ENCODE measurements at regions of chr6 and their contacts with region 1.

Region 1: DNA sequence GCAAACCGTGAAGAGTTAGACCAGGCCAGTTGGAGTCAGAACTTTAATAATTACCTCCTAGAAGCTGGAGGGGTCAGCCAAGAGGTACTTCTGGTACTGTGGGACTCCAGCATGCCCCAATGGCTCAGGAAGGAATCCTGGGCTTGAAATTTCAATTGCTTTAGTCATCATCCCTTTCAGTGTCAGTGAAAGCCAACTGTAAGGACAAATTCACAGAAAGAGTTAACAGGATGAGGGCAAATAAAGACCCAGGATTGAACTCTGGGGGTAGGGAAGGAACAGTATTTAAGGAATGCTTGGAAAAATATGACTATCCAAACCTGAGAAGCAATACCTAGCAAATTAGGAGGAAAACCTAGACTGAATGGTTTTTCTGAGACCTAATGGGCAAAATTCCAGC is 735.1 kb upstream of the MARCKS start:
- DNase-seq: peak; percentile 62 to 95
- H3K4me3 ChIP-seq: peak overlapping the region; percentile 6; the same call in 1 of the 2 replicates
- H3K27ac ChIP-seq: peak overlapping the region; percentile 93
- H3K4me1 ChIP-seq: peaks cover 57% of the 10 kb centered on the region
- H3K27me3 ChIP-seq: no peaks in the 10 kb centered on the region
- CTCF ChIP-seq: peak; percentile 63

Region 2: GRCh38 chr6:112906726-112907125 is 215.3 kb before region 1 on chr6:
- CTCF ChIA-PET with region 1: no interaction called
- POLR2A ChIA-PET with region 1: no interaction called
- intact Hi-C with region 1: loop called (anchors 1 kb)
- DNase-seq: no peak
- H3K4me3 ChIP-seq: no peak overlapping the region
- H3K27ac ChIP-seq: no peak overlapping the region
- H3K4me1 ChIP-seq: peaks cover 9% of the 10 kb centered on the region
- H3K27me3 ChIP-seq: no peaks in the 10 kb centered on the region
- CTCF ChIP-seq: no peak

Region 3: DNA sequence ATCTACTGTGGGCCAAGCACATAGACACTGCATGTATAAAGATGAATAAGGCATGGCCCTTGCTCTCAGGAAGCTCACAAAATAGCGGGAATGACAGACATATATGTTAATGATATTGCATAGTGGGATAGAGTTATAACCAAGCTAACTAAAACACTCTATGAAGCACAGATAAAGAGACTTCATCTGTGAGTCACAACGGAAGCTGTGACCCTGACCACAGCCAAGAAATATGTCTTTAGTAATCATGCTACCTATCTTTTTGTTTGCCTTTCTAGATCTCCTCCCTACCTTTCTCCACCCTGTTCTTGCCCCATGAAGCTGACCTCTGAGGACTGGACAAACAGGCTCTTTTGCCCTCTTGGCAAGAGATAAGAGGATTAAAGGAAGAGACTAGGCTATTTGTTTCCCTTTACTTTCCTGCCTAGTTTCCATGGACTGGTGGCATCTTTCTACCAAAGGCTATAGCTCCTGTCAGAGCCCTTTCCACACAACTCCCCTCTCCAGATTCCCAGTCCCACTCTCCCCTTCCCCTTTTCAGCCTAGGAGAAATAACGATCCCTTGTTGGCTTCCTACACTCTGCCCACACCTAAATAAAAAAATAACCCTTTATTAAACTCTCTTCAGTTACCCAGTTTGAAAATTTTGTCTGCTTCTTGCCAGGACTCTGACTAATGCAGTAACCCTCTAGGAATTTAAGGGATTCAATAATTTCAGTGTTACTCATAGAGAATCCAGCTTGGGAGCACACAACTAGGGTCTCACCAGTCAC is 230.2 kb after region 1 on chr6:
- CTCF ChIA-PET with region 1: no interaction called
- POLR2A ChIA-PET with region 1: no interaction called
- intact Hi-C with region 1: loop called (anchors 1 kb)
- DNase-seq: peak; percentile 77 to 100
- H3K4me3 ChIP-seq: peak overlapping the region; percentile 27
- H3K27ac ChIP-seq: peak overlapping the region; percentile 94
- H3K4me1 ChIP-seq: peaks cover 59% of the 10 kb centered on the region
- H3K27me3 ChIP-seq: no peaks in the 10 kb centered on the region
- CTCF ChIP-seq: no peak

Region 4: GRCh38 chr6:113433335-113433991 is 311.4 kb after region 1 on chr6:
- CTCF ChIA-PET with region 1: no interaction called
- POLR2A ChIA-PET with region 1: no interaction called
- intact Hi-C with region 1: loop called (anchors 1 kb)
- DNase-seq: peak; percentile 61 to 99
- H3K4me3 ChIP-seq: peak overlapping the region; percentile 16; the same call in 1 of the 2 replicates
- H3K27ac ChIP-seq: peak overlapping the region; percentile 87
- H3K4me1 ChIP-seq: peaks cover 48% of the 10 kb centered on the region
- H3K27me3 ChIP-seq: no peaks in the 10 kb centered on the region
- CTCF ChIP-seq: no peak

Region 5: GRCh38 chr6:113654396-113654795 is 532.3 kb after region 1 on chr6:
- CTCF ChIA-PET with region 1: no interaction called
- POLR2A ChIA-PET with region 1: no interaction called
- intact Hi-C with region 1: loop called (anchors 1 kb)
- DNase-seq: peak; percentile 81 to 95
- H3K4me3 ChIP-seq: 0 out of 2 replicates have a peak overlapping the region, but pooled peaks have one; percentile 20
- H3K27ac ChIP-seq: peak overlapping the region; percentile 75
- H3K4me1 ChIP-seq: peaks cover 27% of the 10 kb centered on the region
- H3K27me3 ChIP-seq: no peaks in the 10 kb centered on the region
- CTCF ChIP-seq: no peak

Region 6: DNA sequence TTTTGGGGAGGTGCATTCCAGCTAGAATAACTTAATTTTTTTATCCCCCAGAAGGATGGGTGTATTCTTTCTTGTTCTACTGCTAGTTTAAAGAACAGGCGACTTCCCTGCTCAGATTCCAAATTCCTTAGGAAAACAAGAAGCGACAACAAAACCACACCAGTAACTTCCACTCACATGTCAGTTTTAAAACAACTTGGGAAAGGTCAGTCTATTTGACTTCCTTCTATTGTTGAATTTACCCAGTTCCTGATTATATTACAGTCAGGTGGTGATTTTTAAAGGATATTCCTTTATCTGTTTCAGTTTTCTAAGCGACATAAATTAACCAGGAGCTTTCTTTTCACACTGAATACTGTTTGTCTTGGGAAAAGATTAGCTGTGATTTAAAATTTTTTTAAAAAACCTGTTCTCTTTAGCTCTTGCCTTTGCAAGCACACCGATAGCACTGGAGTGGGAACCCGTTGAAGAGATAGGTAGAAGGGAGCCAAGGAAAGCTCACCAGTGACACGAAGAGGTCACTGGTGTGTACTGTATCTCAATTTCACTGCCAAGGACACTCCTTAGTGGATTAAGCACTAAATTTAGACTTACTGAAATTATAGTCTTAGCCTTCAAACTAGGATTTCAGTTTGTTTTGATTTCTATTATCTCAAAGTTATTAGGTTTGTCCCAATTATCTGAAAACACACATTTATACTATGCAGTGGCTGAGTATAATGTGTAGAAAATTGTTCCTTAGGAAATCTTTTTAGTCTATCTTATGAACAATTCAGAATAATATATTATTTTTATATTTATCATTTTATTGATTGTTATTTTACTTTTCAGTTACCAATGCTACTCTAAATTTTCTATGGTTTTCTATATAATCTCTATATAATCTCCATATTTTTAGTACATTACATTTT is 757.4 kb after region 1 on chr6:
- CTCF ChIA-PET with region 1: interaction called, 3 read pairs
- POLR2A ChIA-PET with region 1: no interaction called
- intact Hi-C with region 1: loop called (anchors 1 kb)
- DNase-seq: peak; percentile 54 to 77
- H3K4me3 ChIP-seq: no peak overlapping the region
- H3K27ac ChIP-seq: peak overlapping the region; percentile 49
- H3K4me1 ChIP-seq: peaks cover 10% of the 10 kb centered on the region
- H3K27me3 ChIP-seq: no peaks in the 10 kb centered on the region
- CTCF ChIP-seq: peak; percentile 85